Activated naive CD4-positive, alpha-beta T cell treated with anti-CD3 and anti-CD28 coated beads for 36 hours (primary cell): ENCODE measurements at regions of chr11 and their contacts with region 1.

Region 1: GRCh38 chr11:9384535-9385303 is at the start of gene IPO7:
- DNase-seq: peak; percentile 94
- H3K4me3 Mint-ChIP-seq: peak within 1 kb of the TSS; percentile 92
- H3K27ac Mint-ChIP-seq: peak within 1 kb of the TSS; percentile 83
- H3K4me1 Mint-ChIP-seq: peaks cover 36% of the 10 kb centered on the region
- H3K27me3 Mint-ChIP-seq: no peaks in the 10 kb centered on the region
- total RNA-seq, gene IPO7: 164 to 177 TPM

Region 2: GRCh38 chr11:9314291-9315036 is 70.3 kb before region 1 on chr11 and contains the start of gene TMEM41B:
- CTCF ChIA-PET with region 1: interaction called, 3 read pairs
- intact Hi-C with region 1: loop called (anchors 1 kb)
- DNase-seq: peak; percentile 99
- H3K4me3 Mint-ChIP-seq: peak within 1 kb of the TSS; percentile 99
- H3K27ac Mint-ChIP-seq: peak within 1 kb of the TSS; percentile 92
- H3K4me1 Mint-ChIP-seq: peaks cover 37% of the 10 kb centered on the region
- H3K27me3 Mint-ChIP-seq: peaks cover 13% of the 10 kb centered on the region
- total RNA-seq, gene TMEM41B: 27.8 to 30.5 TPM

Region 3: DNA sequence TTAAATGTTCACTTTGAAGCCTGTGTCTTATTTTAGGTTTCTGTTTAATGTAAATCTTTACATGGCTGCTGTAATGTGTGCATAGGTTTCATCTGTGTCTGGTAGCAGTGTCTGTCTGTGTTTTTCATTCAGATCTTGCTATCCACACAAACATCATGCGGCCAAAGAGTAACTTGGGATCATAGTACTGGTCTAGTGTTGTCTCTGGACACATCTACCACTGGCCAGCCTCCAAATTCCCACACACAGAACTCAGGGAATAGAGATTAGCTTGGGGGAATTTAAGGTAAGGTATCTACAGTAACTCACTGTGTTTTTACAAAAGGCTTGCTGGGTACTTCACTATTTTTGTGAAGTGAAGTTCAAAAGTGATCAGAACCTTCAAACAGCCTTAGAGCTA is 44.0 kb after region 1 on chr11:
- CTCF ChIA-PET with region 1: no interaction called
- intact Hi-C with region 1: loop called (anchors 5 kb)
- DNase-seq: no peak
- H3K4me3 Mint-ChIP-seq: no peak overlapping the region
- H3K27ac Mint-ChIP-seq: no peak overlapping the region
- H3K4me1 Mint-ChIP-seq: no peaks in the 10 kb centered on the region
- H3K27me3 Mint-ChIP-seq: no peaks in the 10 kb centered on the region